CD4-positive, alpha-beta memory T cell (primary cell): ENCODE measurements at regions of chr7 and their contacts with region 1.

Region 1: GRCh38 chr7:22793593-22794462 is 28.8 kb downstream of the TOMM7 start:
- DNase-seq: no peak
- H3K4me3 ChIP-seq: no peak overlapping the region
- H3K4me3 Mint-ChIP-seq: no peak overlapping the region
- H3K27ac ChIP-seq: no peak overlapping the region
- H3K27ac Mint-ChIP-seq: no peak overlapping the region
- H3K4me1 ChIP-seq: no peaks in the 10 kb centered on the region
- H3K4me1 Mint-ChIP-seq: no peaks in the 10 kb centered on the region
- H3K27me3 ChIP-seq: no peaks in the 10 kb centered on the region
- H3K27me3 Mint-ChIP-seq: peaks cover 0 to 3% of the 10 kb centered on the region in 2 donors

Region 2: DNA sequence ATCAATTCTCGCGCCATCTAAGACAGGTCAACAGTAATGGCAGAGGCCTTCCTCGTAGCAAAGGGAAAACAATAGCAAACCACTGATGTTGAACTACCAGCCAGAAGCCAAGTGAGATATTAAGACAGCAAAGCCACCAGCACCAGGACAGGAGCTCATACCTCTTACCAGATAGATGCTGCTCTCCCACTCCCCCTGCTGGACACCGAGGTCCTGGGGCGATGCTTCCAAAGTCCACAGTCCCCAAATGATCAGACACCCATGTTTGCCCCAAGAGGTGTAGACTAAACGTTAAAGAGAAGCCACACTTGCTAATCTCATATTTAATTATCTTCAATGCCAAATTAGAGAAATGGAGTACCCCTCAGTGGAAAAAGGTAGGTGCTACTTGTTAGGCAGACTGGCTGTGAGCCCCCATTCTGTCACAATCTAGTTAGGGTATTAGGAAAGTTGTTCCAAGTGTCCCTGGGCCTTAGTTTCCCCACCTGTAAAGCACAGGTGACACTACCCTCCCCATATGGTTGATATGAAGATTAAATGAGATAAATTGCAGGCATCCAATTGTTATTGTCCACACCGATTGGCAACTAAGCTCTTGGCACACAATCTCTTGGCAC is 11.1 kb before region 1 on chr7:
- CTCF ChIA-PET with region 1: interaction called, 10 read pairs
- POLR2A ChIA-PET with region 1: no interaction called
- intact Hi-C with region 1: no loop called
- DNase-seq: peak; percentile 53 to 62 (median 58)
- H3K4me3 ChIP-seq: no peak overlapping the region
- H3K4me3 Mint-ChIP-seq: no peak overlapping the region
- H3K27ac ChIP-seq: no peak overlapping the region
- H3K27ac Mint-ChIP-seq: no peak overlapping the region
- H3K4me1 ChIP-seq: no peaks in the 10 kb centered on the region
- H3K4me1 Mint-ChIP-seq: no peaks in the 10 kb centered on the region
- H3K27me3 ChIP-seq: no peaks in the 10 kb centered on the region
- H3K27me3 Mint-ChIP-seq: no peaks in the 10 kb centered on the region